GM13976 (cell line): ENCODE measurements at regions of chr2 and their contacts with region 1.

Region 1: DNA sequence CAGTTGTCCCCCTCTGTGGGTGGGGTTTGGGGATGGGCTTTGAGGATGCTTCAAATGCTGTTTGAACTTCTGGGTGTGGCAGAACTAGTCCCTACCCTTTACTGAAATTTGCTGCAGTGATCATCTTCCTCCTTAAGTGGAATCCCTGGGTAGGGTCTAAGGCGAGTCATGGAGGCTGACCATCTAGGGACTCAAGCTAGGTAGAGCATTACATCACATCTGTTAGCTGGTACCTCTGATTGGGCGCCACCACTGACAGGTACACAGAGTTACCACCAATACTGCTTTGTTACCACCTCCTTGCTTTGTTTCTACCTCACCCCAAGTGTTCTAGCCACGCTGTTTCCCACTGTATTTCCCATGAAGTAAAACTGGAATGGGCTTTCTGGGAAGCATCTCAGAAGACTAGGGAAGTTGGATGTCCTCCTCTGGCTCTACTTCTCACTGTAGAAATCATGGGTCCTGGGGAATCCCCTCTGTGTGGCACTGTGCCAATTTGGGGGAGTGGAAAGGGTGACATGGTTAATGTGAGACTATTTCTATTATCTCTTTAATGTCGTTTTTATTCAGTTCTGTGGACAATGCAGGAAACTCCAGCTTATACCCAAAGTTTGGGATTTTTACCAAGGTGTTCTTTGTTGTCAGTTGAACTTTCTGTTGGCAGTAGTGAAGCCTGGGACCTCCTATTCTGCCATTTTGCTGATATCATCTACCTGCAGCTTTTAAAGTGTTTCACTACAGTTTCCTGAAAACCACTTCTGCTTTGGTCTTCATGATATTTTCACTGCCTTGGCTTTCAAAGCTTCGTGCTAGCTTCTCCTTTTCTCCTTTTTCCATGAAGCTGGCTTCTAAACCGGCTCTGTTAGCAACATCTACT is 14.5 kb upstream of the SULT1C4 start:
- DNase-seq: no peak
- CTCF ChIP-seq: no peak

Region 2: DNA sequence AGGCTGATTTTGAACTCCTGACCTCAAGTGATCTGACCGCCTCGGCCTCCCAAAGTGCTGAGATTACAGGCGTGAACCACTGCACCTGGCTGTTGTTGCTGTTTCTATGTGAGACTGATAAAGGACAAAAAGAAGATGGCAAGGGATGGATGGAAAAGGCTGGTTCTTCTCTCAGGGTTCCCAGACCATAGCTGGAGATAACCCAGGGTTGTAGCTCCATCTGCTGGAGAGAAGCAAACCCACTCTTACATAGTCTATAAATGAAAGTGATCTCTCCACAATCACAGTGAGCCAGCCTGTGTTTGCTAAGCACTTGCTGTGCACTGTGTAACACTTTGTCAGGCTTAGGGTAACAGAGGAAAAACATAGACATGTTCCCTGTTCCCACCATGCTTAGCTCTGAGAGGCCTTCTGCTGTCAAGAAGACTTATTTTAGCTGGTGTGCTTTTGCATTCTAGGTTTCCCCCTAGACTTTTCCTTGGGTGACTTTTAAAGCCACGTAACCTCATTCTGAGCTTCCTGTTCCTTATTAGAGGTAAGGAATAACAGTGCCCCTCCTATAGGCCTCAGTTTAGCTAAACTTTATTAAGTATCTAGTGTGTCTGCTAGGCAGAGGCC is 220.7 kb after region 1 on chr2:
- in situ Hi-C with region 1: loop called (anchors 25 kb)
- DNase-seq: peak; percentile 72
- CTCF ChIP-seq: peak; percentile 59

Region 3: GRCh38 chr2:108621087-108621559 is 257.9 kb after region 1 on chr2:
- in situ Hi-C with region 1: no loop called
- DNase-seq: peak; percentile 55
- CTCF ChIP-seq: no peak

Region 4: GRCh38 chr2:108719149-108720044 is 356.1 kb after region 1 on chr2 and contains the start of gene RANBP2:
- in situ Hi-C with region 1: no loop called
- DNase-seq: peak; percentile 92
- CTCF ChIP-seq: no peak